Dendritic cell treated with granulocyte-macrophage colony-stimulating factor and Interleukin-4, amounts not matched to agents 40 ng/mL and 50 ng/mL, for 4 days (primary cell): ENCODE measurements at regions of chr14 and their contacts with region 1.

Region 1: GRCh38 chr14:81205639-81206038 is 15.1 kb downstream of the GTF2A1 start:
- H3K4me3 Mint-ChIP-seq: no peak overlapping the region
- H3K27ac Mint-ChIP-seq: peak overlapping the region; percentile 32
- H3K4me1 Mint-ChIP-seq: peaks cover 42% of the 10 kb centered on the region
- H3K27me3 Mint-ChIP-seq: no peaks in the 10 kb centered on the region

Region 2: DNA sequence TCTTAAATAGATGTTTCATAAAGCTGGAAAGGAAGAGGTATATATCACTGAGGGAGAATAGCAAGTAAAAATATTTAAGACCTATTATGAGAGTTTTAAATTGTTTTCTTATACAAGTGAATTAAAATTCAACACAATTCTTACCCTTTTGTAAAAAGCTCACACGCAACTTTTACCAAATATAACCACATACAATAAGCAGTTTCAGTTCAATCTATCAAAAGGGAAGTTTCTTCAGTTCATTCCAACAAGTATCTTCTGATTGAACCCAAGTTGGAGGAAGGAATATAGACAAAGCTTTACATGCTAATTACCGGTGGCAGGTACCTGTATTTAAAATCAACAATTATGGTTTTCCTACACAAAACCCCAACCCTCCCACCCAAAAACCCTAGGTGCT is 26.0 kb before region 1 on chr14:
- intact Hi-C with region 1: loop called (anchors 2 kb)
- H3K4me3 Mint-ChIP-seq: no peak overlapping the region
- H3K27ac Mint-ChIP-seq: peak overlapping the region; percentile 25
- H3K4me1 Mint-ChIP-seq: peaks cover 34% of the 10 kb centered on the region
- H3K27me3 Mint-ChIP-seq: no peaks in the 10 kb centered on the region

Region 3: DNA sequence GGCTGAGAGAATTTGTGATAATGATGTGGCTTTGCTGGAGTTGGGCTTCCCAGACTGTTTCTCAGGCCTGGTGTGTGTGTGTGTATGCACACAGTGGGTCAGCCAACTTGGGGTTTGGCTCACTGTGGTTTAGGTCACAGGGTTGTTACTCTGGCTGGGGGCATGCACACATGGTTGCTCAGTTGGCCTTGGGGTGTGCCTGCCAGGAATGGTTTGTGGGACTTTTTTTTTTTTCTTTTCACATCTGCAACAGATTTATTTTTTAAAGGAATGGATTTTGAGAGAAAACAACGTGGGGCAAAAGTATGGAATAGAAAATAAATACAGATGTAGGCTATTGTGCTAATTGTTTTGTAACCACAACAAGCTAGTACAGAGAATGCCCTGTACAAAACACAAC is 40.1 kb after region 1 on chr14:
- intact Hi-C with region 1: no loop called
- H3K4me3 Mint-ChIP-seq: no peak overlapping the region
- H3K27ac Mint-ChIP-seq: no peak overlapping the region
- H3K4me1 Mint-ChIP-seq: no peaks in the 10 kb centered on the region
- H3K27me3 Mint-ChIP-seq: peaks cover 3% of the 10 kb centered on the region